Transverse colon (tissue), 4 donors: ENCODE measurements at regions of chr15 and their contacts with region 1.

Region 1: DNA sequence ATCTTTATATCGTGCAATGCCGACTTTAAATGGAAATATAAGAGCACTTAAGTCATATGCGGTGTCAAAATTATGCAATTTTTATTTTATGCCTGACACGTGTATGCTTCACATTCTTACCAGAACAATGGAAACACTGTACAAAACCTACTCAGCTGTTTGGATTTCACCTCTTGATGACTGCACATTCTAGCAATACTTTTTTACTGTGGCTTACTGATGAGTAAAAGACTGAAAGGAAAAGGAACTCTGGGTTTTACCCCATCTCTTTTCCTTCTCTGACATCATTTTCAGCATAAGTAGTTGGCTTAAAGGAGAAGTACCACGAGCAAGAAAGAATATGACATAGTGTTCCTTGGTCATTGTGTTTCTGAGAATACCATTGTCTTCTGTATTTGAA is 142.8 kb downstream of the POLR2M start:
- DNase-seq: no peak
- H3K4me3 ChIP-seq: no peak overlapping the region
- H3K27ac ChIP-seq: no peak overlapping the region
- H3K4me1 ChIP-seq: no peaks in the 10 kb centered on the region
- H3K27me3 ChIP-seq: no peaks in the 10 kb centered on the region
- CTCF ChIP-seq: no peak
- EP300 ChIP-seq: no peak
- POLR2A ChIP-seq: no peak

Region 2: DNA sequence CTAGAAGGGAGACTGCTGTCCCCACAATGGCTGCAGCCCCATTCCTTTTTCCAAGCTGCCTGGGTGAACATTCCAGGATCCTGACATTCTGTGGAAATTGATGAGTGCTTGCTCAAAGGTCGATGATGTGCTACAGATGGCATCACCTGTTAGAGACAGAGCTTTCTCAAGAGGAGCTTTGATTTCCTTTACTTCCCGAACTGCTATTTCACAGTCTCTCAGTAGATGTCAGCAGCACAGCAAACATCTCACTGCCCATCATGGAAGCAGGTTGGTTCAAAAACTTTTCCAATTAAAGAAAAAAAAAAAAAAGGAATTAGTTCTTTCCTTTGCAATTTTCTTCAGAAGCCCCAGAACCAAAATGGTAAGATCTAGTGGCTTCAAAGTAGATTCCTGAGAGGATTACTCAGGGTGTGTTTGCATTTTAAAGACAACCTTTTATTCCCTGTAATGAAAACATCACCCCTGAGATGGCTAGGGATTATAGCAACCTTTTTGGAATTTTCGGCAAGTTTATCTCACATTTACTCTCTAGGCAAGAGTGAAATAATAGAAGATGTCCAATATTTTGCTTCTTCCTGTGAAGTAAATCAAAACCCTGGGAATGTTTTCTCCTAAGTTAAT is 98.0 kb before region 1 on chr15:
- in situ Hi-C with region 1: loop called in 3 of 4 experiments (anchors 5 to 10 kb)
- intact Hi-C with region 1: no loop called
- DNase-seq: no peak
- H3K4me3 ChIP-seq: no peak overlapping the region
- H3K27ac ChIP-seq: no peak overlapping the region
- H3K4me1 ChIP-seq: peaks cover 0 to 5% (median 0%) of the 10 kb centered on the region in 4 donors
- H3K27me3 ChIP-seq: no peaks in the 10 kb centered on the region
- CTCF ChIP-seq: peak; percentile 33 to 53 (median 45)
- EP300 ChIP-seq: no peak
- POLR2A ChIP-seq: no peak